ENCODE measurements at regions of chr17 and their contacts with region 1.

Region 1: DNA sequence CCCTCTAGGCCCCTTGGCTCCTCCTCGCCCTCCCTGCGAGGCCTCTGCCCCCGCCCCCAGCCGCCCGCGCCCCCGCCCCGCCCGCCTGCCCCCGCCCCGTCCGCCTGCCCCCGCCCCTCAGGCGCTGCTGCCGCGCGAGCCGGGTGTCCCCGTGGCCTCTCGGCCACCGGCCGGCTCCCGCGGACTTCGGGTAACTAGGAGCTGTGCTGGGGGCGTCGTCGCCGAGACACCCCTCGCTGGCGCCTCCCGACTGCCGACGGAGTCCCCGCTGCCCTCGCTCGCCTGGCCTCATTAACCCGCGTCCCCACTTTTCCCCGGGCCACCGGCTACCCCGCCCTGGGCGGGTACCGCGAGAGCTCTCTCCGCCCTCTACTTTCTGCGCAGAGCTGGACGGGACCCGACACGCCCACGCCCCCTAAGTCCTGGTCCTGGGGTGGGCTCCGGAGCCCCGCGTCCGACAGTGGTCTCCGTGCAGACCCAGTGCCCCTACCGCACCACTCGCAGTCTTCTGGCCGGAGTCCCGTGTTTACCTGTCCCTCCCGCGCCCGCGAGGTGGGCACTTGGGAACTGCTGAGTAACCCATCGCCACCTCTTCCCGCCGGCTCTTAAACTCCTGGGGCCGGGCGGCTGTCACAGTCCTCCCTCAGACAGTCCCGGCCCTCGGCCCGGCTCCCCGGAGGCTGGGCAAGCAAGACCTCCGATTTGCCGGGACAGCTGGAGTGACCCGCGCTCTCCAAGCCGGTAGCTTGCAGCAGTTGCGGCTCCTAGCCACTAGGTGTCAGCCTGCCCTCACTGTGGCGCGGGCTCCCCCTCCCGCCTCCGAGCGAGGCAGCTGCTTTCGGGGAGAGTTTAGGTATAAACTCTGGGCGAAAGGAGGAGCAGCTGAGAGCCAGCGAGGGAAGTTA is at the start of gene TLCD1:
- DNase-seq: peak; percentile 97
- H3K4me3 Mint-ChIP-seq: peak within 1 kb of the TSS; percentile 91
- H3K27ac Mint-ChIP-seq: peak within 1 kb of the TSS; percentile 99
- H3K4me1 Mint-ChIP-seq: peaks cover 27% of the 10 kb centered on the region
- H3K27me3 Mint-ChIP-seq: no peaks in the 10 kb centered on the region
- CTCF ChIP-seq: peak; percentile 99
- total RNA-seq, gene TLCD1: 13.4 and 18.7 TPM in 2 replicates

Region 2: GRCh38 chr17:28598799-28599310 is 127.6 kb before region 1 on chr17 and contains the start of gene SPAG5:
- CTCF ChIA-PET with region 1: no interaction called
- POLR2A ChIA-PET with region 1: no interaction called
- intact Hi-C with region 1: no loop called
- DNase-seq: peak; percentile 92
- H3K4me3 Mint-ChIP-seq: peak within 1 kb of the TSS; percentile 87
- H3K27ac Mint-ChIP-seq: peak within 1 kb of the TSS; percentile 90
- H3K4me1 Mint-ChIP-seq: peaks cover 21% of the 10 kb centered on the region
- H3K27me3 Mint-ChIP-seq: no peaks in the 10 kb centered on the region
- CTCF ChIP-seq: no peak
- total RNA-seq, gene SPAG5: 31.5 and 38.1 TPM in 2 replicates

Region 3: GRCh38 chr17:28750178-28751047 is 23.9 kb after region 1 on chr17:
- CTCF ChIA-PET with region 1: interaction called, 365 read pairs
- POLR2A ChIA-PET with region 1: interaction called, 1,135 read pairs
- intact Hi-C with region 1: loop called (anchors 1 kb)
- DNase-seq: peak; percentile 94
- H3K4me3 Mint-ChIP-seq: no peak overlapping the region
- H3K27ac Mint-ChIP-seq: no peak overlapping the region
- H3K4me1 Mint-ChIP-seq: peaks cover 13% of the 10 kb centered on the region
- H3K27me3 Mint-ChIP-seq: no peaks in the 10 kb centered on the region
- CTCF ChIP-seq: peak; percentile 99

Region 4: DNA sequence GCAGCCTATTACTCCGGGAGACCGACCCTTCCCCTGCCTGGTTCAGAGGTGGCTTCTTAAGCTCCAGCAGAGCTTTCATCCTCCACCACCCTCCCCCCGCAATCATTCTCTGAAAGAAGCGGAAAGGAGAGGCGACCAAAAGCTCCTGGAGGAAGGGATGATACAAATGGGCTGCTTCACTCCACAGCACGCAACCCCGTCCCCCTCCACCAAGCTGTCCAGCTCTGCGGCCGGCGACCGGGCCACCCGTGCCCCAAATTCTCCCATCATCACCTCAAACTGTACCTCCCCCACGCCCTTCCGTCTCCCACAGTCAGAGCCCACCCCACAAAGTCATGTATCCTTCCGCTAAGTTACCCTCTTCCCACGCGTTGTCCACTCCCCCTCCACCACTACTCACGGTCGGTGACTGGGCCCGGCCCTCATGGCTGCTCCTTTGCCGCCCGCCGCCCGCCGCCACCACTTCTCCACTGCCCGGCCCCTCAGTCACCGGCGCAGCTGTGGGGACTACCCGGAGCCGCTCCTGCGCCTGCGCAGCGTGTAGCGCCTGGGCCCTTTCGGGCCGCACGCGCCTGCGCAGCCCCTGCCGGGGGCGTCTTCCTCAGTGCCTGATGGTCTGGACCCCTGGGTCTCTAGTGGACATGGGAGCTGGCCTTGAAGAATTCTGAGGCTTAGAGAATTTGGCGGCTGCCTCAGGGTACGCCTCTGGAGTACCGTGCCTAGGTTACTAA is 116.0 kb after region 1 on chr17 and contains the start of gene FAM222B:
- CTCF ChIA-PET with region 1: interaction called, 6 read pairs
- POLR2A ChIA-PET with region 1: interaction called, 11 read pairs
- intact Hi-C with region 1: no loop called
- DNase-seq: peak; percentile 78
- H3K4me3 Mint-ChIP-seq: peak within 1 kb of the TSS; percentile 92
- H3K27ac Mint-ChIP-seq: peak within 1 kb of the TSS; percentile 50
- H3K4me1 Mint-ChIP-seq: peaks cover 5% of the 10 kb centered on the region
- H3K27me3 Mint-ChIP-seq: no peaks in the 10 kb centered on the region
- CTCF ChIP-seq: no peak
- total RNA-seq, gene FAM222B: 18.5 and 22.2 TPM in 2 replicates

Region 5: GRCh38 chr17:28902819-28903545 is 176.5 kb after region 1 on chr17 and contains the start of gene DHRS13:
- CTCF ChIA-PET with region 1: interaction called, 18 read pairs
- POLR2A ChIA-PET with region 1: interaction called, 64 read pairs
- intact Hi-C with region 1: loop called (anchors 2 kb)
- DNase-seq: peak; percentile 93
- H3K4me3 Mint-ChIP-seq: peak within 1 kb of the TSS; percentile 72
- H3K27ac Mint-ChIP-seq: peak within 1 kb of the TSS; percentile 63
- H3K4me1 Mint-ChIP-seq: peaks cover 30% of the 10 kb centered on the region
- H3K27me3 Mint-ChIP-seq: no peaks in the 10 kb centered on the region
- CTCF ChIP-seq: peak; percentile 98
- total RNA-seq, gene DHRS13: 9.1 and 9.5 TPM in 2 replicates

Region 6: GRCh38 chr17:28925912-28926365 is 199.5 kb after region 1 on chr17:
- CTCF ChIA-PET with region 1: interaction called, 12 read pairs
- POLR2A ChIA-PET with region 1: interaction called, 4 read pairs
- intact Hi-C with region 1: no loop called
- DNase-seq: peak; percentile 88
- H3K4me3 Mint-ChIP-seq: no peak overlapping the region
- H3K27ac Mint-ChIP-seq: peak overlapping the region; percentile 62
- H3K4me1 Mint-ChIP-seq: peaks cover 20% of the 10 kb centered on the region
- H3K27me3 Mint-ChIP-seq: no peaks in the 10 kb centered on the region
- CTCF ChIP-seq: no peak